ENCODE measurements at regions of chr20 and their contacts with region 1.

Region 1: GRCh38 chr20:50540620-50541605 is 30.7 kb downstream of the PTPN1 start:
- DNase-seq: no peak
- H3K4me3 ChIP-seq: no peak overlapping the region
- H3K27ac ChIP-seq: peak overlapping the region; percentile 30 to 78
- H3K4me1 ChIP-seq: peaks cover 0 to 4% of the 10 kb centered on the region in 2 donors
- H3K27me3 ChIP-seq: no peaks in the 10 kb centered on the region
- CTCF ChIP-seq: no peak
- POLR2A ChIP-seq: no peak

Region 2: DNA sequence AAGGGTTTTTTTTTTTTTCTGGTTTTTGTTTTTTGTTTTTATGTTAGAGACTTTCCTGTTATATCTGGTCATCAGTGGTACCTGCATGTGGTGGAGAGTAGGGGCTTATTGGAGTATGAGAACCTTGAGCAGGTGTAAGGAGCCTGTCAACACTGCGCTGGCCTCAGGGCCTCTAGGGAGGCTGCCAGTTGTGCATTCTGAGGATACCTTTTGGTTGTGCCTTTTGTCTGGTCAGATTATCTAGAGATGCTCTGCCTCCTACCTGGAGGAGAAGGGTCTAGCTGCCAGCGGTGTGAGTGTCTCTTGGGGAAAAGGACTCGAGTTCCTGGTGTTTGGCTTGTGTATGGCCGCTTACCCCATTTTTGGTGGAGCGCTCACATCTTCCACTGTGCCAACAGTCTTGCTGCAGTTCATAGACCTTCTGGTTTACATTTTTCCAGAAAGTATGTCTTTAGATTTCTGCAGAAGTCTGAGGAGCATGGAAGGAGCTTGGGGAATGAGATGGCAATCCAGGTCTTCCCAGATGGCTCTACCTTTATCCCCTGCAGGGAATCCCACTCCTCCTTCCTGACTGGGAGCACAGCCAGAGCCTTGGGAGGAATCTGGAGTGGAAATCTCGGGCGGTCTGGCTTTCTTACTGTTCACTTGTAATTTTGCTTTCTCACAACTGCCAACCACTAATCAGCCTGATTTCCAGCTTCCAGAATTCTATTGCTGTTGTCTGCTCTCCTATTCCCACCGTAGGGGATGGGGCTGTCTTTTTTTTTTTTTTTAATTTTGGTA is 19.1 kb after region 1 on chr20:
- intact Hi-C with region 1: loop called (anchors 1 kb)
- DNase-seq: no peak
- H3K4me3 ChIP-seq: no peak overlapping the region
- H3K27ac ChIP-seq: no peak overlapping the region
- H3K4me1 ChIP-seq: no peaks in the 10 kb centered on the region
- H3K27me3 ChIP-seq: no peaks in the 10 kb centered on the region
- CTCF ChIP-seq: no peak
- POLR2A ChIP-seq: no peak

Measured in breast epithelium (tissue), 4 donors.